ENCODE measurements at regions of chr15 and their contacts with region 1.

Region 1: DNA sequence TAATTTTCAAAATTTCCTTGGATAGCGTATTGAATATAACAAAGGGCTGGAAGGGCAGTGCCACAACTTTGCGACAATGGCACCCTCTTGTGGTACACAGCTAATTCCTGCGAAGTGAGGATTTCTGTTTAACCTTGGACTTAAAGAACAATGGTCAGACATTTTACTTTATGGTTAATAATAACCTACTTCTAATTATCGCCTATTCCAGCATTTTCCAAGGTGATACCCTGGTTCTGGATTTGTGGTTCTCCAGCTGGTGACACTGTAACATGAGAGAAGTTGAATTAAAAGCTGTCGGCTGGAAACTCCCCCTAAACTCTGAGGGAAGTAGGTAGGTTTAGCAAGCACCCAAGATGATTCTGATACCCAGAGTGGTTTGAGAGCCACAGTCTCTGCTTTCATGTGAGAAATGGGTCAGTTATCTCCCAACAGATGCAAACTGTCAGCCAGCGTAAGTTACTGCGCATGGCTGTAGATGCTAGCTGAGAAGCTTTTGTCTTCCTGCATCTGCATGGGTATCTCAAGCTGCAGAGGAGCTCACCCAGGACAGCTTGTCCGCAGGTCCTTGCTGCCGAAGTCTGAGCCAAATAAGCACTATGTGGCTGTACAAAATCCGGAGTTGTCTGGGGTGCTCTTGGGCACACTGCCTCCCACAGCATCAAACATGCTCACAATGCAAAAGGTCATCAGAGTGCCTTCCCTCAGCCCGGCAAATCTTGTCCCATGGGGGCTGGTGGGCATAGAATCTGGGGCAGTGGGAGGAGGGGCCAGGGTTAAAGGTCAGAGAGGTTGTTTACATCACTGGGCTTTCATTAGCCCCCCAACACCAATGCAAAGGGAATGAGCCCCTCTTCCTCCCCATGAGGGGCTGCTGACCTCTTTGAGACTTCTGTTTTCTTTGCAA is 6.6 kb upstream of the CHSY1 start:
- DNase-seq: peak; percentile 68
- H3K4me3 Mint-ChIP-seq: no peak overlapping the region
- H3K27ac Mint-ChIP-seq: no peak overlapping the region
- H3K4me1 Mint-ChIP-seq: peaks cover 20% of the 10 kb centered on the region
- H3K27me3 Mint-ChIP-seq: peaks cover 42% of the 10 kb centered on the region

Region 2: DNA sequence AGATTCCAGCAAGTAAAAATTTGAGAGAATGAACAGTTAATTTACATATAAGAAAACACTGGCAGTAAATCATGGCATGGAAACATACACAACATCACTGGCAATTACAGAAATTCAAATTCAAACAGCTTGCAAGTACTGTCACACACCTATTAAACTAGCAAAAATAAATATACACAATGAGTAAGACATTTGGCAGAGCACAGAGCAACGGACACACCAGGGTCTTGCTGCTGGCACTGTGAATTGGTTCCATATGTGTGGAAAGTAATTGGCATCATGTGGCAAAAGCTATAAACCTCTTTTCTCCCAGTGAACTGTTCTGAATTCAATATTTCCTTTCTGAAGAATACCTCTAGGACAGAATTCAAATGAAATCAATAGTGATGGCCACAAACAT is 261.0 kb before region 1 on chr15:
- CTCF ChIA-PET with region 1: no interaction called
- DNase-seq: no peak
- H3K4me3 Mint-ChIP-seq: no peak overlapping the region
- H3K27ac Mint-ChIP-seq: no peak overlapping the region
- H3K4me1 Mint-ChIP-seq: no peaks in the 10 kb centered on the region
- H3K27me3 Mint-ChIP-seq: peaks cover 20% of the 10 kb centered on the region

Region 3: DNA sequence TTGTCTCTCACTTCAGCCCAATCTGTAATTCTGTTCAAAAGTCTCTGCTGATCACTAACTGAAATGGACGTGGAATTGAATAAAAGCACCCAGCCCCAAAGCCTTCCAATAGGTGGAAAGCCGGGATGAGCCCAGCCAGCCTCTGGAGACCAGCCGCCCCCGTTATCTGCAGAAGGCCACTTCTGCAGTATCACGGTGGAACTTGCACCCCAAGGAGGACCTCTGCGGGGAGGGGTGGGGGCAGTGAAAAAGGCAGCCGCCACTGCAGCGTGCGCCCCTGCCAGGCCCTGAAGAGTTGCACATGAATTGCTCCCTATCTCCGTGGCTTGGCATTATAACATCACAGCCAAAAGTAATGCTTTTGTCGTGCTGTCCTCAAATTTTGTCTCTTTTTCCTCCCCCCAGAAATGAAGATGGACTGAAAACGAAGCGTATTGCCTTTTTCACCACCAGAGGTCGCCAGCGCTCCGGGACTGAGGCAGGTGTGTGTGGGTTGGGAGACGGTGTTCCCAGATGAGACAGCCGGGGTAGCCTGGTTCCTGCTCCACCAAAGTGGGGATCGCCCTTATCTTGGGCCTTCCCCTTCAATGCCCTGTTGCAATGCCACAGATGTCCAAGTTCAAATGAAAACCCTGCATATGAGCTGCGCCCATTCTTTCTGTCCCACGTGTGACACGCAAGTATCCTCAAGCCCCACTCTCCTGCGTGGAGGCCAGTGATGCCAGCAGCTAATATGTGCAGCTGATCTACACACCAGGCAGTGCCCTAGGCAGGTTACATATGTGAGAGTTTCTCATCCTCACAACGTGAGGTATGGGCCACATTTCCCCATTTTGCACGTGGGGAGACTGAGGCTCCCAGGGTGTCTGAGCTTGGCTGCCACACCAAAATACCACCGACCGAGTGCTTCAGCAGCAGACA is 243.3 kb before region 1 on chr15:
- CTCF ChIA-PET with region 1: interaction called, 176 read pairs
- DNase-seq: peak; percentile 77
- H3K4me3 Mint-ChIP-seq: no peak overlapping the region
- H3K27ac Mint-ChIP-seq: no peak overlapping the region
- H3K4me1 Mint-ChIP-seq: no peaks in the 10 kb centered on the region
- H3K27me3 Mint-ChIP-seq: peaks cover 8% of the 10 kb centered on the region

Region 4: GRCh38 chr15:101024073-101024695 is 234.3 kb before region 1 on chr15:
- CTCF ChIA-PET with region 1: interaction called, 16 read pairs
- DNase-seq: no peak
- H3K4me3 Mint-ChIP-seq: no peak overlapping the region
- H3K27ac Mint-ChIP-seq: no peak overlapping the region
- H3K4me1 Mint-ChIP-seq: no peaks in the 10 kb centered on the region
- H3K27me3 Mint-ChIP-seq: peaks cover 16% of the 10 kb centered on the region

Region 5: GRCh38 chr15:101088788-101089583 is 169.5 kb before region 1 on chr15:
- CTCF ChIA-PET with region 1: interaction called, 85 read pairs
- DNase-seq: peak; percentile 80
- H3K4me3 Mint-ChIP-seq: no peak overlapping the region
- H3K27ac Mint-ChIP-seq: no peak overlapping the region
- H3K4me1 Mint-ChIP-seq: peaks cover 5% of the 10 kb centered on the region
- H3K27me3 Mint-ChIP-seq: peaks cover 47% of the 10 kb centered on the region

Region 6: GRCh38 chr15:101121511-101122090 is 136.9 kb before region 1 on chr15:
- CTCF ChIA-PET with region 1: interaction called, 30 read pairs
- DNase-seq: peak; percentile 68
- H3K4me3 Mint-ChIP-seq: peak overlapping the region; percentile 60
- H3K27ac Mint-ChIP-seq: peak overlapping the region; percentile 58
- H3K4me1 Mint-ChIP-seq: peaks cover 54% of the 10 kb centered on the region
- H3K27me3 Mint-ChIP-seq: peaks cover 5% of the 10 kb centered on the region

Region 7: GRCh38 chr15:101276501-101277037 is 18.1 kb after region 1 on chr15:
- CTCF ChIA-PET with region 1: interaction called, 19 read pairs
- DNase-seq: peak; percentile 36
- H3K4me3 Mint-ChIP-seq: peak overlapping the region; percentile 93
- H3K27ac Mint-ChIP-seq: peak overlapping the region; percentile 88
- H3K4me1 Mint-ChIP-seq: peaks cover 29% of the 10 kb centered on the region
- H3K27me3 Mint-ChIP-seq: no peaks in the 10 kb centered on the region